AG04450 (cell line): ENCODE measurements at regions of chr4 and their contacts with region 1.

Region 1: GRCh38 chr4:51895813-51896408 is 53.0 kb downstream of the DCUN1D4 start:
- DNase-seq: peak; percentile 33
- H3K4me3 ChIP-seq: no peak overlapping the region
- H3K27ac ChIP-seq: no peak overlapping the region
- H3K27me3 ChIP-seq: no peaks in the 10 kb centered on the region
- CTCF ChIP-seq: peak; percentile 90

Region 2: DNA sequence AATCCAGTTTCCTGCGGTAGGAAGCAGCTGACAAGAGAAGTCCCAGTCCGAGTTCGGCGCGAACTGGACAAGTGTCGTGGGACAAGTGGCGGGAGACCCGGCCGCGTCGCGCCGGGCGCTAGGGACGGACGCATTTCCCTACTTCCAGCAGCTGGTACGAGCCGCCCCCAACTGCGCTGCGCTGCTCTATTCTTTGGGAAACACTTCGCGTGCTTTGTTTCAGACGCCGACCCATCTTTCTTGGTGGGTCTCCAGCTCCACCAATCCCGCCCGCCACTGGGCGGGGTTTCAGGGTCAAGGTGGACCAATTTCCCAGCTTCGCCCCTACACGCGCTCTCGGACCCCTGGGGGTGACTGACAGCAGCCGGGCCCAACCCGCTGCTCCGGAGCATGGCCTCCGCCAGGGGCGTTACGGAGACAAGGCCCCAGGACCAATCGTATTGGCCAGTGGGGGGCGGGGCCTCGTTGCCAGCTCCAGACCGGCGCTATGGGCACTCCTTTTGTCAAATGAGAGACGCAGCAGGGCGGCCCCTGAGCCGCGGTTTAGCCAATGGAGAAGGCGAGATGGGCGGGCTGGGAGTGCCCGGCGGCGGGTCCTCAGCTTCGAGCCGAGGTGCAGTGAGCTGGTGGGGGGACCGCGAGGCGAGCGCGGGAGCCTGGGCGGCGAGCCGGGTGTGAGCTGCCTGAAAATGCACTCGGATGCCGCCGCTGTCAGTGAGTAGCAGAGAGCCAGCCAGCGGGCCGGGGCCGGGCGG is 53.2 kb before region 1 on chr4 and contains the start of gene DCUN1D4:
- CTCF ChIA-PET with region 1: interaction called, 15 read pairs
- POLR2A ChIA-PET with region 1: no interaction called
- DNase-seq: peak; percentile 99
- H3K4me3 ChIP-seq: peak within 1 kb of the TSS; percentile 82
- H3K27ac ChIP-seq: peak within 1 kb of the TSS; percentile 78
- H3K27me3 ChIP-seq: no peaks in the 10 kb centered on the region
- CTCF ChIP-seq: peak; percentile 41
- polyA plus RNA-seq, gene DCUN1D4: 55.7 and 67.2 TPM in 2 replicates

Region 3: GRCh38 chr4:51880016-51880915 is 15.6 kb before region 1 on chr4:
- CTCF ChIA-PET with region 1: interaction called, 54 read pairs
- POLR2A ChIA-PET with region 1: no interaction called
- DNase-seq: no peak
- H3K4me3 ChIP-seq: no peak overlapping the region
- H3K27ac ChIP-seq: no peak overlapping the region
- H3K27me3 ChIP-seq: no peaks in the 10 kb centered on the region
- CTCF ChIP-seq: no peak

Region 4: DNA sequence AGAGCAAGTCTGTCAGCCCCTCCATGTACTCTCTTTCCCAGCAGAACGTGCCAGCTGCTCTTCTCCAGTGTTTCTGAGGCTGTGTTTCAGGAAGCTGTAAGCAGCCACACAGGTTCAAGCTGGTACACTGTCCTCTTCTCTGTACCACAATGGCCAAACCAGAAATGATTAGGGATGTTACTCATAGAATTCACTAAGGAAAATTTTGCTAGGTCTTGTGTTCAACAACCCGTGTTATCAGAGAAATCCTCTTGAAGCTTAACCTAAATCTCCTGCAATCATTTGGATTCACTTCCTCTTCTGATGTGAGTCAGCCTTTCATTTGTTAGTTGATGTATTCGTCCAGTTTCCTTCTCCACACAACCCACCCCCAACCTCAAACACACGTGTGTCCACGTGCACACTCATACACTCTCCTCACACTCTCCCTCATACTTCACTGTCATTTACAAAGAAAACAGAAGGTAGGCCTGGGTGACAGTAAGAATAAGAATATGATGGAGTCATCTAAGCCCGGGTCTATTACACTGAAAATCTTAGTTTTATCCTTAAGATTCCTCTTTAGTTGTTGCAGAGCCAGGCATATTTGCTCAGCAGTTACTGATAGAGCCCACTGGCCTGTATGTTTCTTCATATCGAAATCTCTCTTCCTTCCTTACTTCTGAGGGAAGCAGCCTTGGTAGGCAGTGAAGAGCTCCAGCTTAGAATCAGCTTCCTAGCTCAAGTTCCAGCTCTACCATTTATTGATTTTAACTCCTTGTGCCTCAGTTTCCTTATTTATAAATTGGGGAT is 10.5 kb after region 1 on chr4:
- CTCF ChIA-PET with region 1: interaction called, 76 read pairs
- POLR2A ChIA-PET with region 1: no interaction called
- DNase-seq: no peak
- H3K4me3 ChIP-seq: no peak overlapping the region
- H3K27ac ChIP-seq: no peak overlapping the region
- H3K27me3 ChIP-seq: no peaks in the 10 kb centered on the region
- CTCF ChIP-seq: no peak

Region 5: DNA sequence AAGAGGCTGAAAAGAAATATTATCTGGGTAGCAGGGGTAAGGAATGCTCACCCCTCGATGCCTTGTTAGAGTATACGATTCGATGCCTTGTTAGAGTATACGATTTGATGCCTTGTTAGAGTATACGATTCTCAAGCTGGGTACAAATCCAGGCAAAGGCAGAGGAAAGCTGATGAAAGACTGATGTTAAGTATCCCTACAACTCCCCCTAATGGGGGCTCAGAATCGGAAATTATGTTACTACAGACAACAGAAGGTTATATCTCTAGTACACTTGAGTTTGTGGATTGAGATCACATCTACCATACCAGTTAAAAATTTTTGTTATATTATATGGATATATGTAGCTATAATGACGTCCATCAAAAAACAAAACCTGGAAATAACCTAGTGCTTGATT is 119.5 kb after region 1 on chr4:
- CTCF ChIA-PET with region 1: interaction called, 14 read pairs
- POLR2A ChIA-PET with region 1: no interaction called
- DNase-seq: no peak
- H3K4me3 ChIP-seq: no peak overlapping the region
- H3K27ac ChIP-seq: no peak overlapping the region
- H3K27me3 ChIP-seq: no peaks in the 10 kb centered on the region
- CTCF ChIP-seq: peak; percentile 37; the same call in 1 of the 2 replicates

Region 6: GRCh38 chr4:52035190-52035589 is 139.3 kb after region 1 on chr4:
- CTCF ChIA-PET with region 1: interaction called, 27 read pairs
- POLR2A ChIA-PET with region 1: no interaction called
- DNase-seq: no peak
- H3K4me3 ChIP-seq: no peak overlapping the region
- H3K27ac ChIP-seq: no peak overlapping the region
- H3K27me3 ChIP-seq: no peaks in the 10 kb centered on the region
- CTCF ChIP-seq: no peak

Region 7: GRCh38 chr4:52157641-52158316 is 261.9 kb after region 1 on chr4:
- CTCF ChIA-PET with region 1: no interaction called
- POLR2A ChIA-PET with region 1: no interaction called
- DNase-seq: no peak
- H3K4me3 ChIP-seq: no peak overlapping the region
- H3K27ac ChIP-seq: no peak overlapping the region
- H3K27me3 ChIP-seq: no peaks in the 10 kb centered on the region
- CTCF ChIP-seq: no peak